Endothelial cell of umbilical vein (primary cell): ENCODE measurements at regions of chr17 and their contacts with region 1.

Region 1: DNA sequence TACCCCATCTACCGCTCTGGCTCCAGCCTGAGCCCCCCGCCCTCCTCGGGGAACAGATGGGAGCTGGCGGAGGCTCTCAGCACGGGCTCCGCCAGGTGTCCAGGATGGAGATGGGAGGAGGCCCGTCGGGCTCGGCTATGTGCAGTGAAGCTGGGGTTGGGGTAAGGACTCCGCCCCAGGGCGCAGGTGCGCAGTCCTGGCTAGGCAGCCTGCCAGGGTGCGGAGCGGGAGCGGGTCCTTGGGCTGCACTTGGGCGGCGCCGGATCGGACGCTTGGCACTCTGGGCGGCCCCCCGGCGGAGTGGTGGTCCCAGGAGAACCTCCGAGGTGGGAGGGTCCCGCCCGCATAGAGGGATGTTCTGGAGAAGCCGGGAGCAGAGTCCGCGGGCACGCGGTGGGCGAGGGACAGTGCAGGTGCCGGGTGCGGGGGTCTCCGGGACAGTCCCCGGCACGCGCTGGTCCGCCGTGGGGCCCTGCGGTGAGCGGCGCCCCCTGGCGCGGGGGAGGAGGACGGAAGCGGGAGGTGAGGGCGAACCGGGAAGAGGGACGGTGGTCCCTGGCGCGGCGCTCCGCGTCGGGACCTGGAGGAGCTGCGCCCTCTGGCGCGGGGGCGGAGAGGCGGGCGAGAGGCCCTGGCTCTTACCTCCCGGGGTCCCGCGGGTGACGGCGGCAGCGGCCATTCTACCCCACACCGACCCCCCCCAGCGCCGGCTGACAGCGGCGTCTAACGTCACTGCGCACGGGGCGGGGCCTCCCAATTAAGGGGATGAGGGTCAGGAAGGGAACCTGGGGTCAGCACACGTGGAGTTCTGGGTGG is at the start of gene CAMTA2:
- DNase-seq: peak; percentile 83
- H3K4me3 ChIP-seq: peak within 1 kb of the TSS; percentile 58 to 76 (median 60)
- H3K27ac ChIP-seq: peak within 1 kb of the TSS; percentile 66
- H3K4me1 ChIP-seq: peaks cover 24% of the 10 kb centered on the region
- H3K27me3 ChIP-seq: no peaks in the 10 kb centered on the region
- CTCF ChIP-seq: peak; percentile 64 to 81
- POLR2A ChIP-seq: peak; percentile 70
- total RNA-seq, gene CAMTA2: 51.0 and 56.7 TPM in 2 replicates

Region 2: DNA sequence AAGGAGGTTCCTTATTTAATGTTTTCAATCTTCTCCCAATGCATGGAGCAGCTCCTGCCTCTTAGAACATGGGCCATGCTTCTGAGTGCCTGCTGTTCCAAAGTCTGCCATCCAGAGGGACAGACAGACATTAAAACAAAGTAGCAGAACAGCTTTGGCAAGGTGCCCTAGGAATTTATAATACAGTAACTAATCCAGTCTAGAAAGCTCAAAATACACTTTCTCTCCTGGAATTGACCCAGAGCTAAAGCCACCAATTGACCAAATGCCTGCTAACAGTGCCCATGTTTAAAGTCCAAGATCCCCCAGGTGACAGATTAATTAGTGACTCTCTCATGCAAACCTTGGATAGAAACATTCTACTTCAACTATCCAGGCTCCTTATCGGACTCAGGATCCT is 73.2 kb before region 1 on chr17:
- CTCF ChIA-PET with region 1: interaction called, 50 read pairs
- POLR2A ChIA-PET with region 1: no interaction called
- dilution Hi-C with region 1: no loop called
- intact Hi-C with region 1: loop called (anchors 1 kb)
- DNase-seq: no peak
- H3K4me3 ChIP-seq: no peak overlapping the region
- H3K27ac ChIP-seq: no peak overlapping the region
- H3K4me1 ChIP-seq: no peaks in the 10 kb centered on the region
- H3K27me3 ChIP-seq: no peaks in the 10 kb centered on the region
- CTCF ChIP-seq: no peak
- POLR2A ChIP-seq: no peak

Region 3: GRCh38 chr17:4939796-4940624 is 47.1 kb before region 1 on chr17 and contains the starts of genes RNF167 and SLC25A11:
- CTCF ChIA-PET with region 1: interaction called, 8 read pairs
- POLR2A ChIA-PET with region 1: no interaction called
- dilution Hi-C with region 1: no loop called
- intact Hi-C with region 1: loop called (anchors 2 kb)
- DNase-seq: peak; percentile 100
- H3K4me3 ChIP-seq: peak within 1 kb of the TSS; percentile 45 to 84 (median 77)
- H3K27ac ChIP-seq: peak within 1 kb of the TSS; percentile 81
- H3K4me1 ChIP-seq: peaks cover 21% of the 10 kb centered on the region
- H3K27me3 ChIP-seq: no peaks in the 10 kb centered on the region
- CTCF ChIP-seq: no peak
- POLR2A ChIP-seq: peak; percentile 85
- total RNA-seq, gene RNF167: 60.2 and 61.0 TPM in 2 replicates
- total RNA-seq, gene SLC25A11: 50.2 and 58.2 TPM in 2 replicates

Region 4: DNA sequence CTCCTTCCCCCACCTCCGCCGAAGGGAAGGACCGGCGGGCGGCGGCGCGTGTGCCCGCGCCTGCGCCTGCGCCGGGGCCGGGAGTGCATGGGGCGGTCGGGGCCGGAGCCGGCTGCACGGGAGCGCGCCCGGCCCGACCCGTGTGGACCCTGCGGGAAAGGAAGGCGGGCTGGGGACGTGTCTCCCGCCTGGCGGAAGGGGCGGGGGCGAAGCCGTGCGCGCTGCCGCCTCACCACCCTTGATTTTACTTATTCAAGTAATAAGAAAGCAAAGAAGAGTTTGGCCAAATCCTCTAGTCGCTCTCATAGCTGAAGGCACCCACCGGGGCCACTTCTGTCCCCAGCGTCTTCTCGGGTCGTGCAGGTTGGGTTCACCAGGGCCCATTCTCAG is 38.2 kb before region 1 on chr17:
- CTCF ChIA-PET with region 1: interaction called, 4 read pairs
- POLR2A ChIA-PET with region 1: no interaction called
- dilution Hi-C with region 1: no loop called
- intact Hi-C with region 1: loop called (anchors 1 kb)
- DNase-seq: peak; percentile 88
- H3K4me3 ChIP-seq: peak overlapping the region; percentile 81 to 99 (median 95)
- H3K27ac ChIP-seq: peak overlapping the region; percentile 90
- H3K4me1 ChIP-seq: peaks cover 44% of the 10 kb centered on the region
- H3K27me3 ChIP-seq: no peaks in the 10 kb centered on the region
- CTCF ChIP-seq: no peak
- POLR2A ChIP-seq: peak; percentile 51

Region 5: DNA sequence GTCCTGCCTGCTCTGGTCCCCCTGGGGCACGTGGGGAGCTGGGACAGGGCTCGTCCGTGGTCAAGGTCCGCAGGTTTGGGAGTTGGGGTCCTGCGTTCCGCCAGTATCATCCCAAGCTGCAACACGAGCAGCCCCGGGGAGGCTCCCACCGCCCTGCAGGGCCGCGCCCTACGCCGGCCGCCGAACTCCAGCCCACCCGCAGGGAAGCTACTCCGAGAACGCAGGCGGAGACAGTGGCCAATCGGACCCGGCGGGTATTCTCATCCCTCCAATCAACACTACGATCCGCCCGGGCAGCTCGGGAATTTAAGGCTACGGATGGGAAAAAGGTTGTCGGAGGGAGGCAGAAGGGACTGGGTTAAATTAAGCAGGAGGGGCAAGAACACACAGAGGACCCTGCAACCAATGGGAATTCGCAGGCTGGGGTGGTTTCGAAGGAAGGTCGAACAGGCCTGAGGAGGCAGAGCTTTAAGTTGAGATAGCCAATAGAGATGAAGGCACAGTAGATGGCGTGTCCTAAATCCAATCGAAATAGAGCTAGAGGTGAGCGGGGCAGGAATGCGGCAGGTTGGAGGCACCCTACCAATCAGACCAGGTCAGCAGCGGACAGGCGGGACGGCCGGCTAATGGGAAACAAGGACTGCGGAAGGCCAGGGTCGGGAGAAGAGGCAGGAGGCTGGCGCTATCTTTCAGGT is 20.2 kb before region 1 on chr17:
- CTCF ChIA-PET with region 1: interaction called, 40 read pairs
- POLR2A ChIA-PET with region 1: no interaction called
- dilution Hi-C with region 1: no loop called
- intact Hi-C with region 1: loop called (anchors 1 kb)
- DNase-seq: peak; percentile 100
- H3K4me3 ChIP-seq: peak overlapping the region; percentile 14 to 87 (median 63)
- H3K27ac ChIP-seq: peak overlapping the region; percentile 69
- H3K4me1 ChIP-seq: peaks cover 24% of the 10 kb centered on the region
- H3K27me3 ChIP-seq: no peaks in the 10 kb centered on the region
- CTCF ChIP-seq: no peak
- POLR2A ChIP-seq: no peak

Region 6: DNA sequence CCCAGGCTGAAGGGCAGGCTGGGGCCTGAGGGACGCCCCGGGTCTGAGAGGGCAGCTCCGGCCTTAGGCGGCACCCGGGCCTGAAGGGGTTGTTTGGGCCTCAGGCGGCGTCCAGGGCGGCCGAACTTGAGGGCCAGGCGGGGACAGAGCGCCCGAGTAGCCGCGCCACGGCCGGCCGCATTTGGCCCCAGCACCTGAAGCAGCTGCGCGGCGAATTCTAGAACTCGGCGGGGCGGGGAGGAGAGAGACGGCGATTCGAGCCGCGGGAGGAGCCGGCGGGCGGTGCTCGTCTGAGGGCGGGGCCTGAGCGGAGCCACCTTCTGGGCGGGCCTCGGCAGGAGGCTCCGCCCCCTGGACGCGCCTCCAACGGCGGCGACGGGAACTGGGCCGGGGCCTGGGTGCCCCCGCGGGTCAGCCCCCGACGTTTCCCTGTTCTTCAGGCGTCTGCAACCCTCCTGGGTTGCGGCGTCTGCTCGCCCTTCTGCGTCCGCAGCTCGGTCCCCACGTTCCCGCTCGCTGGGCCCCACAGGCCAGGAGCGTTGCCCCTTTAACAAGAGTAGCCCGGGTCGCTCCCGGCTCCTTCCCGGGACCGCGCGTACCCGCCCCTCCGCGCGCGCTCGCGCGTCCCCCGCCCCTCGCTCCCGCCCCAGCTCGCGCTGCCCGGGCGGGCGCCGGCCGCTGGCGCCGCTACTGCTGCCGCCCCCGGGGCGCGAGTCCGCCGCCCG is 10.3 kb after region 1 on chr17 and contains the starts of genes INCA1 and KIF1C:
- CTCF ChIA-PET with region 1: interaction called, 20 read pairs
- POLR2A ChIA-PET with region 1: interaction called, 5 read pairs
- dilution Hi-C with region 1: no loop called
- intact Hi-C with region 1: loop called (anchors 1 kb)
- DNase-seq: peak; percentile 89
- H3K4me3 ChIP-seq: peak within 1 kb of the TSS; percentile 77 to 95 (median 82)
- H3K27ac ChIP-seq: peak within 1 kb of the TSS; percentile 73
- H3K4me1 ChIP-seq: peaks cover 19% of the 10 kb centered on the region
- H3K27me3 ChIP-seq: no peaks in the 10 kb centered on the region
- CTCF ChIP-seq: peak in 1 of 2 donors; percentile 13
- POLR2A ChIP-seq: peak; percentile 73
- total RNA-seq, gene INCA1: 0.71 and 1.0 TPM in 2 replicates
- total RNA-seq, gene KIF1C: 171 and 174 TPM in 2 replicates

Region 7: GRCh38 chr17:5042157-5043022 is 55.2 kb after region 1 on chr17:
- CTCF ChIA-PET with region 1: no interaction called
- POLR2A ChIA-PET with region 1: no interaction called
- dilution Hi-C with region 1: no loop called
- intact Hi-C with region 1: no loop called
- DNase-seq: no peak
- H3K4me3 ChIP-seq: no peak overlapping the region
- H3K27ac ChIP-seq: no peak overlapping the region
- H3K4me1 ChIP-seq: no peaks in the 10 kb centered on the region
- H3K27me3 ChIP-seq: no peaks in the 10 kb centered on the region
- CTCF ChIP-seq: no peak
- POLR2A ChIP-seq: no peak